AG04450 (cell line): ENCODE measurements at regions of chr12 and their contacts with region 1.

Region 1: GRCh38 chr12:38138225-38139221 is 178.1 kb upstream of the ALG10B start:
- DNase-seq: peak; percentile 27
- H3K4me3 ChIP-seq: peak overlapping the region; percentile 31
- H3K27ac ChIP-seq: no peak overlapping the region
- H3K27me3 ChIP-seq: no peaks in the 10 kb centered on the region
- CTCF ChIP-seq: peak; percentile 91

Region 2: GRCh38 chr12:38316391-38317129 is 178.0 kb after region 1 on chr12 and contains the start of gene ALG10B:
- CTCF ChIA-PET with region 1: interaction called, 16 read pairs
- POLR2A ChIA-PET with region 1: no interaction called
- DNase-seq: peak; percentile 94
- H3K4me3 ChIP-seq: peak within 1 kb of the TSS; percentile 89
- H3K27ac ChIP-seq: peak within 1 kb of the TSS; percentile 77
- H3K27me3 ChIP-seq: no peaks in the 10 kb centered on the region
- CTCF ChIP-seq: peak; percentile 58
- polyA plus RNA-seq, gene ALG10B: 3.3 and 3.7 TPM in 2 replicates